ENCODE measurements at regions of chr2 and their contacts with region 1.

Region 1: DNA sequence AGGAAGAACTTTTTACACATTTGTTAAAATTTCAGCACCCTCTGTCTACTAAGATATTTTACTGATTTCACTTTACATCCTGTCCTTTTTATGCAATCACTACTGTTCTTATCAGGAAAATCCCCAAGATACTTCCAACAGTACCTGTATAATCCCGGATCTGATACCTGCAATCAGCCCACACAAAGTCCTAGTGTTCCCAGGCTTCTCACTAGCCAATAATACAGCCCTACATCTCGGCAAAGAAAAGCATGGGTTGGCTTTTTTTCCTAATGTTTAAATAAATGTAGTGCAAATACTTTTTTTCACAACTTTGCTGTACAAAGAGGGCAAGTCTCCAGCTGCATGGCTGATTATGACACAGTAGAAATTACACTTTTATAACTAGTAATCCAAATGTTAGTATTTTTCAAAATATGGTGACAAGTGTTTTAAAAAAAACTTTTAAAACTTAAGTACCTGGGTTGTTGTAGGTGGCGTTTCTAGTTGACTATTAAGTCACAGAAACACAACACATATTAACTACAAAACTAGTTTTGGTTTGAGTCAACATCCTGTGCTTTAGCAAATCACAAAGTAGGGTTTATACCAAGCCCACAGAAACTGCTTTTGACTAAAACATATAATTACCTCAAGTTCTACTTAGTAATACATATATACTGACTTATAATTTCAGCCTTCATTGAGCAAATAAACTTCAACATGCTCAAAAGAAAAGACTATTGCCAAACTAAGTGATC is 19.5 kb downstream of the CNOT11 start:
- DNase-seq: no peak
- ATAC-seq: no peak
- H3K4me3 ChIP-seq: no peak overlapping the region
- H3K27ac ChIP-seq: no peak overlapping the region
- H3K4me1 ChIP-seq: peaks cover 0 to 9% (median 0%) of the 10 kb centered on the region in 12 donors
- H3K27me3 ChIP-seq: no peaks in the 10 kb centered on the region
- CTCF ChIP-seq: no peak
- POLR2A ChIP-seq: no peak

Region 2: DNA sequence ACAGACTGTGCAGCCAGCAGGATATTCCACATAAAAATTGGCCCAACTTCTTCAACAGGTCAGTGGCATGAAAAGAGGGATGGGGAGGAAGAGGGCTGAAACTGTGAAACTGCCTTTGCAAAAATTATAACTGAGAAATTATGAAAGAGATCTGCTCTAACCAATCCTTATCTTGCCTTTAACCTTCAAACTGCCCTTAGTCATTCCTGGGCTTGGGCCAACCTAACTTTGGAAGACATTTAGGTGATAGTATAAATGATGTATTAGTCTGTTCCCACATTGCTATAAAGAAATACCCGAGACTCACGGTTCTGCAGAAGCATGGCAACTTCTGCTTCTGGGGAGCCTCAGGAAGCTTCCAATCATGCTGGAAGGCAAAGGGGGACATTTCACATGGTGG is 195.6 kb before region 1 on chr2:
- intact Hi-C with region 1: no loop called
- DNase-seq: no peak
- ATAC-seq: peak in 1 of 4 donors; percentile 44
- H3K4me3 ChIP-seq: no peak overlapping the region
- H3K27ac ChIP-seq: peak overlapping the region in 1 of 12 donors; percentile 45
- H3K4me1 ChIP-seq: peaks cover 0 to 24% (median 7%) of the 10 kb centered on the region in 12 donors
- H3K27me3 ChIP-seq: no peaks in the 10 kb centered on the region
- CTCF ChIP-seq: no peak
- POLR2A ChIP-seq: no peak

Region 3: DNA sequence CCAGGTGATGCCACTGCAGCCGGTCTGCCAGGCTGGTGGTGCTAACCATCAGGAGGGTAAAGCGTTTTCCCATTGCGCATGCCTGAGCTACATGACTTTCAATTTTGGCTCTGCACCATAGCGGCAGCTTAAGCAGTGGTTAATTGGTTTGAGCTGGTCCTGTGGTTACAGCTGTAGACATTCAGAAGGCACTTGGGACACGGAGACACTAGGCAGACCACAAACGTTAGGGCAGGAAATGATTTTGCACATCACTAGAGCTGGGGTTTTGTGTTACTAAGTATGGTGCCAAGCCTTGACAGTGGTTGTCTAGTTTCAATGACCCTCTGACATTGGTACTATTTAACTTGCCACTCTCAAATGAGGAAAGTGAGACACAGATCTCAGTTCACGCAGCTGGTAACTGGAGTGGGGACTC is 48.4 kb before region 1 on chr2:
- intact Hi-C with region 1: no loop called
- DNase-seq: no peak
- ATAC-seq: peak in 1 of 4 donors; percentile 44
- H3K4me3 ChIP-seq: no peak overlapping the region
- H3K27ac ChIP-seq: no peak overlapping the region
- H3K4me1 ChIP-seq: peaks cover 0 to 6% (median 0%) of the 10 kb centered on the region in 12 donors
- H3K27me3 ChIP-seq: no peaks in the 10 kb centered on the region
- CTCF ChIP-seq: no peak
- POLR2A ChIP-seq: no peak

Region 4: DNA sequence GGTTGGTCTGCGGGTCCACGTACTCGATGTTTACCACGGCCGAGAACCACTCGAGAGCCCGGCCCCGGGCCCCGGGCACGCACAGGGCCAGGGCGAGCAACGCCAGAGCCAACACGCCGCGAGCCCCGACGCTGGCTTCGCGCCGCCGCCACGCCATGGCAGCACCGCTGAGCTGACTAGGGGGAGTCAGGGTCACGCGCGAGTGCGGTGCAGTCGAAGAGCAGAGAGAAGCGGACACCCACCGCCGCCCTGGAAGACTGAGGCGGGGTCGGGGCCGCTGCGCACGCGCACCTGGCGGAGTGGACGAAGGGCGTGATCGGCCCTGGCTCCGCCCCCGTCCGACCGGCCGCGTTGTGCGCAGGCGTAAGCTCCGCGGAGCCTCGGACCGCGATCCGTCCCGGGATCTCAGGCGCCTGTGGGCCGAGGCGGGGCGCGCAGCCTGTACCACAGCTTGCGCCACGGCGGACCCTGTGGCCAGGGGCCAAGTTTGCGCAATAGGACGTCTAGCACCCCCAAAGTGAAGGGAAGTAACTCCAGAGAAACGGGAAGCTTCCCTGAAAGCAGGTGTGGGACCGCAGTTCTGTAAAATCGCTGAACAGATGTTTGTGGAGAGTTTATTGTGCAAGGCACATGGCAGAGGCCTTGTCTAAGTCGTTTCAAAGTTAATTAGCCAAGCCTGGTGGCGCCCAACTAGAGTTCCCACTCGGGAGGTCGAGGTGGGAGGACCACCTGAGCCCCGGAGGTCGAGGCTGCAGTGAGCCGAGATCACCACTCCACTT is 36.4 kb after region 1 on chr2 and contains the start of gene RNF149:
- intact Hi-C with region 1: loop called in 2 of 10 experiments (anchors 5 kb)
- DNase-seq: peak; percentile 92 to 98 (median 95)
- ATAC-seq: peak; percentile 90 to 95 (median 94)
- H3K4me3 ChIP-seq: peak within 1 kb of the TSS; percentile 73 to 96 (median 83)
- H3K27ac ChIP-seq: peak within 1 kb of the TSS; percentile 33 to 99 (median 90)
- H3K4me1 ChIP-seq: peaks cover 2 to 65% (median 36%) of the 10 kb centered on the region in 12 donors
- H3K27me3 ChIP-seq: no peaks in the 10 kb centered on the region
- CTCF ChIP-seq: peak in 2 of 12 donors; percentile 7 to 14
- POLR2A ChIP-seq: peak in 1 of 2 donors; percentile 95
- total RNA-seq, gene RNF149: 10.9 to 46.1 (median 15.8) TPM

Region 5: GRCh38 chr2:101361121-101361870 is 89.1 kb after region 1 on chr2:
- intact Hi-C with region 1: no loop called
- DNase-seq: no peak
- ATAC-seq: no peak
- H3K4me3 ChIP-seq: no peak overlapping the region
- H3K27ac ChIP-seq: peak overlapping the region in 1 of 12 donors; percentile 49
- H3K4me1 ChIP-seq: peaks cover 0 to 15% (median 0%) of the 10 kb centered on the region in 12 donors
- H3K27me3 ChIP-seq: no peaks in the 10 kb centered on the region
- CTCF ChIP-seq: no peak
- POLR2A ChIP-seq: no peak

Region 6: GRCh38 chr2:101558740-101559519 is 286.7 kb after region 1 on chr2:
- intact Hi-C with region 1: no loop called
- DNase-seq: peak in 2 of 5 donors; percentile 32 to 44
- ATAC-seq: peak; percentile 66 to 87 (median 84)
- H3K4me3 ChIP-seq: peak overlapping the region in 7 of 12 donors; percentile 0 to 20 (median 1)
- H3K27ac ChIP-seq: peak overlapping the region; percentile 58 to 89 (median 80)
- H3K4me1 ChIP-seq: peaks cover 0 to 21% (median 13%) of the 10 kb centered on the region in 12 donors
- H3K27me3 ChIP-seq: no peaks in the 10 kb centered on the region
- CTCF ChIP-seq: no peak
- POLR2A ChIP-seq: no peak

Measured in heart left ventricle (tissue), 16 donors.